Head of caudate nucleus (tissue), 42 donors: ENCODE measurements at regions of chr11 and their contacts with region 1.

Region 1: DNA sequence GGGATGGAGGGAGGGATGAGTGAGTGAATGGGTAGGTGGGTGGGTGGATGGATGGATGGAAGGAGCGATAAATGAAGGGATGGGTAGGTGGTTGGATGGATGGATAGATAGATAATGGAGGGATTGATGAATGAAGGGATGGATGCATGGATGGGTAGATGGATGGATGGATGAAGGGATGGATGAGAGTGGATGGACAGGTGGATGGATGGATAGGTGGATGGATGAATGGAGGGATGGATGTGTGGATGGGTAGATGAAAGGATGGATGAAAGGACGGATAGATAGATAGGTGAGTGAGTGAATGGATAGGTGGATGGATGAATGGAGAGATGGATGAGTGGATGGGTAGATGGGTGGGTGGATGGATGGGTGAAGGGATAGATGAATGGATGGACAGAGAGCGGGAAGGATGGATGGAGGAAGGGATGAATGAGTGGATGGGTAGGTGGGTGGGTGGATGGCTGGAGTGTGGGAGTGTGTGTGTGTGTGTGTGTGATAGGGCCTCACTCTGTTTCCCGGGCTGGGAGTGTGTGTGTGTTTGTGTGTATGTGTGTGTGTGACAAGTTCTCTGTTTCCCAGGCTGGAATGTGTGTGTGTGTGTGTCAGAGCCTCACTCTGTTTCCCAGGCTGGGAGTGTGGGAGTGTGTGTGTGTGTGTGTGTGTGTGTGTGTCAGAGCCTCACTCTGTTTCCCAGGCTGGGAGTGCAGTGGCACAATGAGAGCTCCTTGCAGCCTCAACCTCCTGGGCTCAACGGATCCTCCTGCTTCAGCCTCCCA is 2.1 kb upstream of the PRR33 start:
- DNase-seq: peak in 1 of 42 donors; percentile 8

Region 2: GRCh38 chr11:1916986-1917670 is 23.4 kb after region 1 on chr11:
- intact Hi-C with region 1: loop called (anchors 1 kb)
- DNase-seq: no peak